Posterior vena cava (tissue), 2 donors: ENCODE measurements at regions of chr15 and their contacts with region 1.

Region 1: GRCh38 chr15:33320017-33320416 is 9.2 kb downstream of the RYR3 start:
- DNase-seq: no peak

Region 2: GRCh38 chr15:33211176-33211808 is 108.7 kb before region 1 on chr15:
- intact Hi-C with region 1: no loop called
- DNase-seq: no peak

Region 3: GRCh38 chr15:33341953-33342352 is 21.9 kb after region 1 on chr15:
- intact Hi-C with region 1: loop called in 1 of 2 experiments (anchors 1 kb)
- DNase-seq: no peak